Activated CD4-positive, alpha-beta memory T cell treated with anti-CD3 and anti-CD28 coated beads for 36 hours (primary cell): ENCODE measurements at regions of chr12 and their contacts with region 1.

Region 1: GRCh38 chr12:55926738-55927587 is 731 bp downstream of the PYM1 start:
- DNase-seq: peak; percentile 96
- H3K4me3 Mint-ChIP-seq: peak overlapping the region; percentile 96
- H3K27ac Mint-ChIP-seq: peak overlapping the region; percentile 98
- H3K4me1 Mint-ChIP-seq: peaks cover 43% of the 10 kb centered on the region
- H3K27me3 Mint-ChIP-seq: no peaks in the 10 kb centered on the region

Region 2: DNA sequence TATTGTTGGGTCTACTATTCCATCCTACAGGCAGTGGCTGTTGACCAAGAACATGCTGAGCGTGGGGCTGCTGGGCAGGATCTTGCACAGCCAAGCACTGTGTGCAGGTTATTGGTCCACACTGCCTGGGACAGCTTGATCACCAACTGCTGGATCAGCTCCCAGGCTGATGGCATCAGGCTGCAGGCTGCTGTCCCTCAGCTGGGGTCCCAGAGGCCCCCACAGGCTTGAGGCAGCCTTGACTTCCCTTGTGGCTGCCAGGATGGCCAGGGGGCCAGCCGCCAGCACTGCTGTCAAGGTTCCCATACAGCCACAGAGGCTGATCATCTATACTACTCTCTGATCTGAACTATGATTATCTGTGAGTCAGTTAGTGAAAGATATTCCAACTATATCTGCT is 344.9 kb before region 1 on chr12:
- CTCF ChIA-PET with region 1: no interaction called
- POLR2A ChIA-PET with region 1: no interaction called
- intact Hi-C with region 1: no loop called
- DNase-seq: no peak
- H3K4me3 Mint-ChIP-seq: no peak overlapping the region
- H3K27ac Mint-ChIP-seq: no peak overlapping the region
- H3K4me1 Mint-ChIP-seq: no peaks in the 10 kb centered on the region
- H3K27me3 Mint-ChIP-seq: peaks cover 28% of the 10 kb centered on the region

Region 3: GRCh38 chr12:55817346-55818139 is 109.4 kb before region 1 on chr12 and contains the starts of genes ORMDL2 and SARNP:
- CTCF ChIA-PET with region 1: interaction called, 17 read pairs
- POLR2A ChIA-PET with region 1: interaction called, 20 read pairs
- intact Hi-C with region 1: loop called (anchors 1 kb)
- DNase-seq: peak; percentile 99
- H3K4me3 Mint-ChIP-seq: no peak within 1 kb of the TSS
- H3K27ac Mint-ChIP-seq: no peak within 1 kb of the TSS
- H3K4me1 Mint-ChIP-seq: peaks cover 49% of the 10 kb centered on the region
- H3K27me3 Mint-ChIP-seq: no peaks in the 10 kb centered on the region
- total RNA-seq, gene ORMDL2: 37.9 to 41.2 TPM
- total RNA-seq, gene SARNP: 104 to 110 TPM

Region 4: GRCh38 chr12:55899082-55899481 is 27.9 kb before region 1 on chr12:
- CTCF ChIA-PET with region 1: interaction called, 5 read pairs
- POLR2A ChIA-PET with region 1: no interaction called
- intact Hi-C with region 1: loop called (anchors 1 kb)
- DNase-seq: peak; percentile 63
- H3K4me3 Mint-ChIP-seq: no peak overlapping the region
- H3K27ac Mint-ChIP-seq: peak overlapping the region; percentile 69
- H3K4me1 Mint-ChIP-seq: peaks cover 10% of the 10 kb centered on the region
- H3K27me3 Mint-ChIP-seq: no peaks in the 10 kb centered on the region

Region 5: DNA sequence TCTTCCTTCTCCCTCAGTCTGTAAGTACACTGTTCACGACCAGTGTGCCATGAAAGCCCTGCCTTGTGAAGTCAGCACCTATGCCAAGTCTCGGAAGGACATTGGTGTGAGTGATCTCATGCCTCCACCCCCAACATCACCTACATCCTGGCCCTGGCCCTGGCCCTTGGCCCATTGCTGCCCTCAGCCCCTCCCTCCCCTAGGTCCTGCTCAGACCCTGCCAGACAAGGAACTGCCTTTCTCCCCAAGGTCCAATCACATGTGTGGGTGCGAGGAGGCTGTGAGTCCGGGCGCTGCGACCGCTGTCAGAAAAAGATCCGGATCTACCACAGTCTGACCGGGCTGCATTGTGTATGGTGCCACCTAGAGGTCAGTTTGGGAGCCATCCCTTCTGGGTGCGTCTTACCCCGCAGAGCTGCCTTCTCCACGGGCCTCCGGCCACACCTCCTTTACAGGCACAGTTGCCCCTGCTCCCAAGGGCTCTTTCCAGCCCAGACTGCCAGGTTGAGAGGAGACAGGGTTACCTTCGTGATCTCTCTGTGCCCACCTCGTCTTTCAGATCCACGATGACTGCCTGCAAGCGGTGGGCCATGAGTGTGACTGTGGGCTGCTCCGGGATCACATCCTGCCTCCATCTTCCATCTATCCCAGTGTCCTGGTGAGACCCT is 13.2 kb after region 1 on chr12:
- CTCF ChIA-PET with region 1: interaction called, 87 read pairs
- POLR2A ChIA-PET with region 1: interaction called, 11 read pairs
- intact Hi-C with region 1: loop called (anchors 1 kb)
- DNase-seq: peak; percentile 89
- H3K4me3 Mint-ChIP-seq: no peak overlapping the region
- H3K27ac Mint-ChIP-seq: peak overlapping the region; percentile 55
- H3K4me1 Mint-ChIP-seq: peaks cover 78% of the 10 kb centered on the region
- H3K27me3 Mint-ChIP-seq: no peaks in the 10 kb centered on the region

Region 6: GRCh38 chr12:55982319-55982936 is 55.5 kb after region 1 on chr12:
- CTCF ChIA-PET with region 1: no interaction called
- POLR2A ChIA-PET with region 1: no interaction called
- intact Hi-C with region 1: no loop called
- DNase-seq: no peak
- H3K4me3 Mint-ChIP-seq: no peak overlapping the region
- H3K27ac Mint-ChIP-seq: no peak overlapping the region
- H3K4me1 Mint-ChIP-seq: peaks cover 13% of the 10 kb centered on the region
- H3K27me3 Mint-ChIP-seq: no peaks in the 10 kb centered on the region

Region 7: GRCh38 chr12:56152318-56153033 is 225.5 kb after region 1 on chr12 and contains the start of gene MYL6B:
- CTCF ChIA-PET with region 1: no interaction called
- POLR2A ChIA-PET with region 1: no interaction called
- intact Hi-C with region 1: loop called (anchors 2 kb)
- DNase-seq: peak; percentile 97
- H3K4me3 Mint-ChIP-seq: peak within 1 kb of the TSS; percentile 78
- H3K27ac Mint-ChIP-seq: peak within 1 kb of the TSS; percentile 96
- H3K4me1 Mint-ChIP-seq: peaks cover 34% of the 10 kb centered on the region
- H3K27me3 Mint-ChIP-seq: no peaks in the 10 kb centered on the region
- total RNA-seq, gene MYL6B: 63.8 to 70.8 TPM